ENCODE measurements at regions of chr4 and their contacts with region 1.

Region 1: GRCh38 chr4:99949034-99949998 is 759 bp downstream of the H2AZ1 start:
- DNase-seq: peak; percentile 72 to 95 (median 82)
- ATAC-seq: peak; percentile 37
- H3K4me3 ChIP-seq: peak overlapping the region; percentile 93
- H3K4me3 Mint-ChIP-seq: no peak overlapping the region
- H3K27ac ChIP-seq: peak overlapping the region; percentile 84 to 90
- H3K27ac Mint-ChIP-seq: no peak overlapping the region
- H3K4me1 ChIP-seq: peaks cover 33% of the 10 kb centered on the region
- H3K4me1 Mint-ChIP-seq: peaks cover 31% of the 10 kb centered on the region
- H3K27me3 ChIP-seq: no peaks in the 10 kb centered on the region
- H3K27me3 Mint-ChIP-seq: no peaks in the 10 kb centered on the region
- CTCF ChIP-seq: peak; percentile 86

Region 2: GRCh38 chr4:98260579-98261290 is 1688.6 kb before region 1 on chr4:
- CTCF ChIA-PET with region 1: no interaction called
- POLR2A ChIA-PET with region 1: interaction called, 4 read pairs
- intact Hi-C with region 1: loop called in 1 of 2 experiments (anchors 5 kb)
- DNase-seq: peak in 13 of 14 experiments; percentile 76 to 96 (median 89)
- ATAC-seq: peak; percentile 68
- H3K4me3 ChIP-seq: peak overlapping the region; percentile 96
- H3K4me3 Mint-ChIP-seq: peak overlapping the region; percentile 95
- H3K27ac ChIP-seq: peak overlapping the region; percentile 81 to 82
- H3K27ac Mint-ChIP-seq: peak overlapping the region; percentile 88
- H3K4me1 ChIP-seq: peaks cover 19% of the 10 kb centered on the region
- H3K4me1 Mint-ChIP-seq: peaks cover 61% of the 10 kb centered on the region
- H3K27me3 ChIP-seq: no peaks in the 10 kb centered on the region
- H3K27me3 Mint-ChIP-seq: no peaks in the 10 kb centered on the region
- CTCF ChIP-seq: no peak

Region 3: DNA sequence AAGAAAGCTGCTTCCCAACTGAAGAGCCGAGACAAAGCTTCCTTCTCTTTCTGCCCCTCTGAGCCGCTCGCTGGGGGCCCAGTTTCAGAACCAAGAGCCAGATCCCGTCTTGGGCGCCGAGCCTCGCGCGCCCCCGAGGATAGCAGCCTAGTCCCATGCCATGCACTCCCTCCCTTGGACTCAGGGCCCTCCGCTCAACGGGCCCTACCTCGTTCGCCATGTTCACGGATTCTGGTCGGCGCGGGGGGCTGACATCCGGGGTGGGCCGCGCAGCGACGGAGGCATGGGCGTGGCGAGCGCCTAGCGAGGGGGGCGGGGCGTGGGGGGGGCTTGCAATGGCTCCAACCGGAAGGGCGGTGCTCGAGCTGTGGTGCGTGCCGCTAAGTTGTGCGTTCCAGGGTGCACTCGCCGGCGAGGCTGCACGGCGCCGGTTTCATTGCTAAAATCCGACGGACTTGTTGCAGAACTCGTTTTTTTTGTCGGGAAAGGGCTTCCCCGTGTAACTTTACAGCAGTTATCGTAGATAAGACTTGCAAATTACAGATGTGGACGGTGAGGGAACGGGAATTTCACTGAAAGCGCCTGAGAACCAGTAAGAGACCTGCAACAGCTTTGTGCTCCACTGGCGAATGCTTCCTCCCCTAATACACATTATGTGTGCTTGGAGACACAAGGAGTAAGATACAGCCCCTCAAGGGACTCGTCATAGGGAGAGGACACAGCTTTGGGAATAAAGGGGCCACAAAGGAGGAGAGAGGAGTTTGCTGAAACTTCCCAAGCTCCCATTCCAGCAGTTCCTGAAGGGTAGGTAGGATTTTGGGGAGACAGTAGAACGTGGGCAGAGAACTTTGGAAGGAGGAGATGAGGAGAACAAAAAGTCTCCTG is 860.6 kb before region 1 on chr4 and contains the start of gene ADH5:
- CTCF ChIA-PET with region 1: no interaction called
- POLR2A ChIA-PET with region 1: interaction called, 12 read pairs
- intact Hi-C with region 1: loop called in 1 of 2 experiments (anchors 5 kb)
- DNase-seq: peak; percentile 86 to 96 (median 91)
- ATAC-seq: peak; percentile 95
- H3K4me3 ChIP-seq: peak within 1 kb of the TSS; percentile 93
- H3K4me3 Mint-ChIP-seq: peak within 1 kb of the TSS; percentile 95
- H3K27ac ChIP-seq: peak within 1 kb of the TSS; percentile 76 to 82
- H3K27ac Mint-ChIP-seq: peak within 1 kb of the TSS; percentile 93
- H3K4me1 ChIP-seq: peaks cover 25% of the 10 kb centered on the region
- H3K4me1 Mint-ChIP-seq: peaks cover 65% of the 10 kb centered on the region
- H3K27me3 ChIP-seq: no peaks in the 10 kb centered on the region
- H3K27me3 Mint-ChIP-seq: no peaks in the 10 kb centered on the region
- CTCF ChIP-seq: no peak
- total RNA-seq, gene ADH5: 49.1 to 52.0 TPM

Region 4: DNA sequence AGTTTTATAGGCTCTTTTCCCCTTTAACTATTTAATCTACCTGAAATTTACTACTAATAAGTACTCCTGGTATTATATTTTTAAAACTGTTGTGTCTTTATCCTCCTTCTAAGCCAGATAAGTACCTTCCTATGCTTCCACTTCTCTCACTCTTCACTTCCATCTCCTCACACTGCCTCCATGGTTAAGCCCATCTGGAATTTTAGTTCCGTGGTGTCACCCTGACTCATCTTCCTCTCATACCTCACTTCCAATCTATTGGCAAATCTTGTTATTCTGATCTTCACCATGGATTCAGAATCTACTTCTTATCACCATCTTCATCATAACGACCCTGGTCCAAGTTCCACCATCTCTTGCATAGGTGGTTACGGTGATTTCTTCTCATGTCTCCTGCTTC is 165.4 kb before region 1 on chr4:
- CTCF ChIA-PET with region 1: no interaction called
- POLR2A ChIA-PET with region 1: no interaction called
- intact Hi-C with region 1: no loop called
- DNase-seq: no peak
- ATAC-seq: no peak
- H3K4me3 ChIP-seq: no peak overlapping the region
- H3K4me3 Mint-ChIP-seq: no peak overlapping the region
- H3K27ac ChIP-seq: no peak overlapping the region
- H3K27ac Mint-ChIP-seq: no peak overlapping the region
- H3K4me1 ChIP-seq: no peaks in the 10 kb centered on the region
- H3K4me1 Mint-ChIP-seq: no peaks in the 10 kb centered on the region
- H3K27me3 ChIP-seq: no peaks in the 10 kb centered on the region
- H3K27me3 Mint-ChIP-seq: peaks cover 11% of the 10 kb centered on the region
- CTCF ChIP-seq: no peak

Region 5: DNA sequence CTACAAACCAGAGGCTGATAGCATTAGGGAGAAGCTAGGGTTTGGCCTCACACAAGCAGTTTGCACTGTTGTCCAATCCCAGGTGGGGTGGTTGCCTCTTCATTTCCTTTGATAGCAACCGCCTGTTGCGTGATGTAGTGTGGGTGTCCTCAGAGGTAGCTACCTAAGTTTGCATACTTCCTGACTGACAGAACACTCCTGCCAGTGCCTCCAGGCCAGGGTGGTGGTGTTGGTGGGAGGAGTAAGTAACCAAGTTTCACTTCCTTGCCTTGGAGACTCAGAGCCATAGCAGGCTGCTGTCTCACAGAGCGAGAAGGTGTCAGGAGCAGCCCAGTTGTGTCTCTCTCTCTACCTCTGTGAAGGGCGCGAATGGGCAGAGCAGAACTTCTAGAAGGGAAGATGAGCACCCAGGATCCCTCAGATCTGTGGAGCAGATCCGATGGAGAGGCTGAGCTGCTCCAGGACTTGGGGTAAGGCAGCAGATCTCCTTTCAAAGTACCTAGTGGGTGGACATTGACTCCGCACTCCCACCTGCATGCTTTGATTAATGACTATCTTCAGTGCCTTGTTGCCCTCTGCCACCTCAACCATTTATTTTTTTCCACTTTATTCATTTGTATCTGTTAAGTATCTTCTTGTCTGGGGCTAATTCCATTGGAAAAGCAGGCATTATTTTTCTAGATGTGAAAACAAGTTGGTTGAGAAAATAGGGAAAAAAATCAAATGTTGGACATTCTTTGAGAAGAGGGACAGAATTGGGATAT is 132.6 kb before region 1 on chr4 and contains the start of gene DAPP1:
- CTCF ChIA-PET with region 1: interaction called, 17 read pairs
- POLR2A ChIA-PET with region 1: interaction called, 38 read pairs
- intact Hi-C with region 1: loop called (anchors 2 kb)
- DNase-seq: peak; percentile 60 to 92 (median 72)
- ATAC-seq: peak; percentile 97
- H3K4me3 ChIP-seq: peak within 1 kb of the TSS; percentile 72
- H3K4me3 Mint-ChIP-seq: peak within 1 kb of the TSS; percentile 92
- H3K27ac ChIP-seq: peak within 1 kb of the TSS; percentile 64 to 66
- H3K27ac Mint-ChIP-seq: peak within 1 kb of the TSS; percentile 91
- H3K4me1 ChIP-seq: peaks cover 30% of the 10 kb centered on the region
- H3K4me1 Mint-ChIP-seq: peaks cover 64% of the 10 kb centered on the region
- H3K27me3 ChIP-seq: no peaks in the 10 kb centered on the region
- H3K27me3 Mint-ChIP-seq: no peaks in the 10 kb centered on the region
- CTCF ChIP-seq: no peak
- total RNA-seq, gene DAPP1: 8.3 to 9.1 TPM

Region 6: DNA sequence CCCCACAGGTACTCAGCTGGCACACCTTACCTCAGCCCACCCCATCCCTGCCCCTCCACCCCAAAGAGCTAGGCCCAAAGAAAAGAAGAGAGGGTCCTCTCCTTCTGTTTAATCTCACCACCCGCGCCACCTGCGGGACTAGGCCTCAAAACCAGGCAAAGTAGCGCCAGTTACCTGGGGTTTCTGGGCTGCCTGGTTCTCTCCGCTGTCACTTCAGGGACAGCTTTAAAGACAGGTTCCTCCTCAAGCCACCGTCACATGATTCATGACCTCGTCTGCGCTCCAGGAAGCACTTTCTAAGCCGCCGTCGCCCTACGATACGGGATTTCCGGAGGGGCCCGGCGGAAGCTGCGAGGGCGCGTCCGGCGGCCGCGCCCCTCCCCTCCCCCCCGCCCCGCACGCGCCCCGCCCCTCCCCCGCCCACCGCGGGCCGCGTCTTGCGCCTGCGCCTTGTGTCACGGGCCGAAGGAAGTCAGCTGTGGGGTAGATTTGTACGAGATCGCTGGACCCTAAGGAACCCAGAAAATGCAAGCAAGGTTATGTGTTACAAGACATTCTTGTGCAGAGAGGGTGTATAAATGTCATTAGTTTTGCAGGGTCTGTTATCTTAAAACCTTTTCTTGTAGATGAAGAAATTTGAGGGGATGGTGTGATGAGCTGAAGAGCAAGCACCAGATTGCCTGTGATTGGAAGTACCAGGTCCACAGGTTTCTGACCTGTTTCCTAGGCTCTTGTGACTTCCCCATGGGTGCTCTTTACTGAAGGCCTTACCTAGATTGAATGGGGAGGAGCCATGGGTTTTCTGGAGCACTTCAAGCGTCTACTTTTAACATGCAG is 54.9 kb before region 1 on chr4 and contains the start of gene LAMTOR3:
- CTCF ChIA-PET with region 1: interaction called, 9 read pairs
- POLR2A ChIA-PET with region 1: interaction called, 109 read pairs
- intact Hi-C with region 1: loop called (anchors 1 to 2 kb)
- DNase-seq: peak; percentile 76 to 97 (median 88)
- ATAC-seq: peak; percentile 98
- H3K4me3 ChIP-seq: peak within 1 kb of the TSS; percentile 61
- H3K4me3 Mint-ChIP-seq: peak within 1 kb of the TSS; percentile 99
- H3K27ac ChIP-seq: peak within 1 kb of the TSS; percentile 71 to 80
- H3K27ac Mint-ChIP-seq: peak within 1 kb of the TSS; percentile 96
- H3K4me1 ChIP-seq: peaks cover 23% of the 10 kb centered on the region
- H3K4me1 Mint-ChIP-seq: peaks cover 53% of the 10 kb centered on the region
- H3K27me3 ChIP-seq: no peaks in the 10 kb centered on the region
- H3K27me3 Mint-ChIP-seq: no peaks in the 10 kb centered on the region
- CTCF ChIP-seq: no peak
- total RNA-seq, gene LAMTOR3: 32.0 to 32.8 TPM

Region 7: DNA sequence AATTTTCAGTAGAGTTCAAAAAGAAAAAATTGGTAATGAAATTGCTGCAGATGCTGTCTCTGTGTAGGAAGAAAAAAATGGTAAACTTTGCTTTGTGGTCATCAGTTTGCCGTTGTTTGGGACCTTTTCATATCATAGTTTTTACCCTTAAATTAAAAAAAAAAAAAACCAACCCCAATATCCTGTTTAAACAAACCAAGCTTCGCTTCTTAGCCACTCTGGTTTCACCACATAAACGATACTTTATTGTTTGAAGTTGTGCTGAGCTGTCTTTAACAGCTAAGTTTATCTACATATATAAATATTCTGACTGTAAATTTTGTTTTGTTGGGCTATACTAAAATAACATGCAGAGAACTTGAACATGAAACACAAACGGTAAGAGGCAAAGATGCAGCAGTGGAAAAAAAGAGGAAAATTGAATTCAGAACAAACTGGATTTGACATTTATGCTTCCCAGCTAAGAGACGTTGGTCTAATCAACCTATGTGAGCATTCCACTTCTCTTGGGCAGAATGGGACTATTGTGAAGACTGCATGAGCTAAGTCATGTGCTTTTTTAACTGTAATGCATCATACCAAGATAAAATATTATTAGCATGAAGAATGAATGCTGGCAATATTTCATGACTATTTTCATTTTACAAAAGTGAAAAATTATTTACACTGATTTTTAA is 16.5 kb after region 1 on chr4:
- CTCF ChIA-PET with region 1: no interaction called
- POLR2A ChIA-PET with region 1: interaction called, 12 read pairs
- intact Hi-C with region 1: no loop called
- DNase-seq: peak in 3 of 14 experiments; percentile 37 to 52 (median 50)
- ATAC-seq: peak; percentile 86
- H3K4me3 ChIP-seq: no peak overlapping the region
- H3K4me3 Mint-ChIP-seq: peak overlapping the region; percentile 12
- H3K27ac ChIP-seq: no peak overlapping the region
- H3K27ac Mint-ChIP-seq: peak overlapping the region; percentile 43
- H3K4me1 ChIP-seq: peaks cover 2% of the 10 kb centered on the region
- H3K4me1 Mint-ChIP-seq: peaks cover 33% of the 10 kb centered on the region
- H3K27me3 ChIP-seq: no peaks in the 10 kb centered on the region
- H3K27me3 Mint-ChIP-seq: no peaks in the 10 kb centered on the region
- CTCF ChIP-seq: no peak

Region 8: GRCh38 chr4:100379583-100380105 is 430.3 kb after region 1 on chr4:
- CTCF ChIA-PET with region 1: no interaction called
- POLR2A ChIA-PET with region 1: no interaction called
- intact Hi-C with region 1: no loop called
- DNase-seq: no peak
- ATAC-seq: no peak
- H3K4me3 ChIP-seq: no peak overlapping the region
- H3K4me3 Mint-ChIP-seq: no peak overlapping the region
- H3K27ac ChIP-seq: no peak overlapping the region
- H3K27ac Mint-ChIP-seq: no peak overlapping the region
- H3K4me1 ChIP-seq: no peaks in the 10 kb centered on the region
- H3K4me1 Mint-ChIP-seq: no peaks in the 10 kb centered on the region
- H3K27me3 ChIP-seq: peaks cover 0 to 6% of the 10 kb centered on the region in 2 experiments
- H3K27me3 Mint-ChIP-seq: peaks cover 21% of the 10 kb centered on the region
- CTCF ChIP-seq: no peak

Region 9: GRCh38 chr4:101347557-101348366 is 1398.4 kb after region 1 on chr4:
- CTCF ChIA-PET with region 1: no interaction called
- POLR2A ChIA-PET with region 1: no interaction called
- intact Hi-C with region 1: loop called in 1 of 2 experiments (anchors 5 kb)
- DNase-seq: peak; percentile 98 to 100 (median 99)
- ATAC-seq: peak; percentile 84
- H3K4me3 ChIP-seq: peak overlapping the region; percentile 86
- H3K4me3 Mint-ChIP-seq: peak overlapping the region; percentile 100
- H3K27ac ChIP-seq: peak overlapping the region; percentile 78 to 84
- H3K27ac Mint-ChIP-seq: peak overlapping the region; percentile 94
- H3K4me1 ChIP-seq: peaks cover 15% of the 10 kb centered on the region
- H3K4me1 Mint-ChIP-seq: peaks cover 38% of the 10 kb centered on the region
- H3K27me3 ChIP-seq: peaks cover 0 to 7% of the 10 kb centered on the region in 2 experiments
- H3K27me3 Mint-ChIP-seq: peaks cover 36% of the 10 kb centered on the region
- CTCF ChIP-seq: no peak

Measured in CD4-positive, alpha-beta T cell (primary cell).